ENCODE measurements at regions of chr3 and their contacts with region 1.

Region 1: GRCh38 chr3:197516517-197516889 is 39.3 kb downstream of the BDH1 start:
- DNase-seq: peak; percentile 94
- ATAC-seq: peak; percentile 71
- H3K4me3 ChIP-seq: no peak overlapping the region
- H3K27ac ChIP-seq: peak overlapping the region; percentile 40; the same call in 1 of the 2 replicates
- H3K4me1 ChIP-seq: peaks cover 11% of the 10 kb centered on the region
- H3K27me3 ChIP-seq: no peaks in the 10 kb centered on the region
- CTCF ChIP-seq: no peak
- POLR2A ChIP-seq: no peak
- RAD21 ChIP-seq: no peak

Region 2: DNA sequence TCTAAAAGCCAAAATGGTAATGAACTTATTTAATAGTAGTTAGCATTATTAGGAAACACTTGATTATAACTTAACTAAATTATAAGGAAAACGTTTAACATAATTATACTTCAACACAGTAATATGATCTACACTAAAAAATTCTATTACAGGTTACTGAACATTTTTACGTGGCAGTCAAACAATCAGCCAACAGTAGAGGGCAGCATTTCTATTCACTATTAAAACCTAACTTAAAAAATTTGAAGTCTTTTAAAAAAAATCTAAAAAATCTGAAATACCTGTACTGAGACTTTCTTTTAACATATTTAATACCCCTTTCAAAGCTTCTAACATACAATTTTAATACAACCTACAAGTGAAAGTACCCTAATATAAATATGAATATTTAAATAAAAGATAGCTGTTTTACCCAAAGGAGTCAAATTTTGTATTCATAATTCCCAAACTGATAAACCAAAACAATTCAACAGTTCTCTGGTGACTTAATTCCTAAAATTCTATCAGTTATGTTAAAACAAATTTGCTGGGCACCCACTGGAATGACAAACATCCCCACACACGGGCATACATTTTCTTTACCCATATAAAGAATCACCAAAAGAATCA is 259.6 kb before region 1 on chr3:
- CTCF ChIA-PET with region 1: no interaction called
- POLR2A ChIA-PET with region 1: no interaction called
- dilution Hi-C with region 1: no loop called
- in situ Hi-C with region 1: loop called (anchors 10 kb)
- intact Hi-C with region 1: no loop called
- DNase-seq: peak; percentile 64
- ATAC-seq: 0 out of 2 replicates have a peak, but pooled peaks have one; percentile 49
- H3K4me3 ChIP-seq: no peak overlapping the region
- H3K27ac ChIP-seq: no peak overlapping the region
- H3K4me1 ChIP-seq: peaks cover 2% of the 10 kb centered on the region
- H3K27me3 ChIP-seq: no peaks in the 10 kb centered on the region
- CTCF ChIP-seq: peak; percentile 74
- POLR2A ChIP-seq: no peak
- RAD21 ChIP-seq: peak; percentile 70

Region 3: DNA sequence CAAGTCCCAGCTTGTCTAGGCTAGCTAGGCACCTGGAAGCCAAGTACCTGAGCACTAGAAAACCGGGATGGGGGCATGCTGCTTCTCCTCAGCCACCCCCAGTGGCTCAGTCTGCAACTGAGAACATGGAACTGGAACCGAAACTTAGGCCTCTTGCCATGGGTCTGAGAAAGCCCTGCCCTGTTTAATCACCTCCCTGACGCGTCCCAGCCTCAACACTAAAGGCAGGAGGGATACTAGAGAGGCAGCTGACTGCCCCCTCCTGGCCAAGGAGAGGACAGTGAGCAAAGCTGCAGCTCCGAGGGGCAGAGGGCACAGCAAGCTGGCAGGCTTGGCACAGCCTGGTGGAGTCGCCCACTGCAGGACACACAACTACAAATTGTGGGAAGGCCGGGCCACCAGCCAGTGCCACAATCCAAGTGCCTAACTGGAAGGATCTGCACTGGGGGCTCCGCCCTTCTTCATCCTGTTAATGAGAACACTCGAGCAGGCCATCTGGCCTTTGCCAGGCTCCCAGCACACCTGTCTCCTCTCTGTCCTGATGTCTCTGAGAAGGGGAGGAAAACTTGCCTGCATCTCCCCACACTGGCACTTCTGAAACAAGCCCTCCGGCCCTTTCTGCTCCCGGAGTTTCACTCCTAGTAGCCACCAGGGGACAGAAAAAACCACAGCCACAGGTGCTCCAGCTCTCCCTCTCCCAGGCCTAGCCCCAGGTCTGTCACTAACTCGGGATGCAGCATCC is 14.5 kb before region 1 on chr3:
- CTCF ChIA-PET with region 1: no interaction called
- POLR2A ChIA-PET with region 1: no interaction called
- dilution Hi-C with region 1: no loop called
- in situ Hi-C with region 1: no loop called
- intact Hi-C with region 1: no loop called
- DNase-seq: peak; percentile 26
- ATAC-seq: peak; percentile 79
- H3K4me3 ChIP-seq: no peak overlapping the region
- H3K27ac ChIP-seq: no peak overlapping the region
- H3K4me1 ChIP-seq: peaks cover 3% of the 10 kb centered on the region
- H3K27me3 ChIP-seq: 0 out of 2 replicates have a peak, but pooled peaks cover 1% of the 10 kb centered on the region
- CTCF ChIP-seq: peak; percentile 52
- POLR2A ChIP-seq: no peak
- RAD21 ChIP-seq: peak; percentile 66

Region 4: DNA sequence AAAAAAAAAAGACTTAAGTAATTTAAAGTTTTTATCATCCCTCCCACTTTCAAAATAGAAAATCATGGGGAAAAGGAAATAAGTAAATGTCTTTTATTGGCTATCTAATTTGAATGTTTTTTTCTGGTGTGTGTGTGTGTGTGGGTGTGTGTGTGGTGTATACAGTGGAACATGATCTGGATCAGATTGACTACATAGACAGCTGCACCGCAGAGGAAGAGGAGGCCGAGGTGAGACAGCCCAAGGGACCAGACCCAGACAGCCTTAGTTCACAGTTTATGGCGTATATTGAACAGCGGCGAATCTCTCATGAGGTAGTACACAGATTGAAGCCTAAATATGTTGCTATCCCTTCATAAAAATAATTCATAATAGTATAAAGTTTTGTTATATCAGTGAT is 319.0 kb after region 1 on chr3:
- CTCF ChIA-PET with region 1: no interaction called
- POLR2A ChIA-PET with region 1: no interaction called
- dilution Hi-C with region 1: no loop called
- in situ Hi-C with region 1: no loop called
- intact Hi-C with region 1: no loop called
- DNase-seq: no peak
- ATAC-seq: no peak
- H3K4me3 ChIP-seq: no peak overlapping the region
- H3K27ac ChIP-seq: no peak overlapping the region
- H3K4me1 ChIP-seq: no peaks in the 10 kb centered on the region
- H3K27me3 ChIP-seq: no peaks in the 10 kb centered on the region
- CTCF ChIP-seq: no peak
- POLR2A ChIP-seq: no peak
- RAD21 ChIP-seq: no peak